Activated T-helper 2 cell treated with anti-CD3 and anti-CD28 coated beads, Interferon-gamma antibody, Interleukin-2, Interleukin-4, amounts not matched to agents 10 μg/mL and 5 μg/mL and 100 μg/mL, durations not matched to agents 14 hours and 24 hours and 36 hours (primary cell): ENCODE measurements at regions of chr11 and their contacts with region 1.

Region 1: GRCh38 chr11:7694235-7694634 is 12.0 kb downstream of the OVCH2 start:
- DNase-seq: no peak
- H3K4me3 Mint-ChIP-seq: no peak overlapping the region
- H3K27ac Mint-ChIP-seq: no peak overlapping the region
- H3K4me1 Mint-ChIP-seq: peaks cover 6% of the 10 kb centered on the region
- H3K27me3 Mint-ChIP-seq: peaks cover 36% of the 10 kb centered on the region

Region 2: DNA sequence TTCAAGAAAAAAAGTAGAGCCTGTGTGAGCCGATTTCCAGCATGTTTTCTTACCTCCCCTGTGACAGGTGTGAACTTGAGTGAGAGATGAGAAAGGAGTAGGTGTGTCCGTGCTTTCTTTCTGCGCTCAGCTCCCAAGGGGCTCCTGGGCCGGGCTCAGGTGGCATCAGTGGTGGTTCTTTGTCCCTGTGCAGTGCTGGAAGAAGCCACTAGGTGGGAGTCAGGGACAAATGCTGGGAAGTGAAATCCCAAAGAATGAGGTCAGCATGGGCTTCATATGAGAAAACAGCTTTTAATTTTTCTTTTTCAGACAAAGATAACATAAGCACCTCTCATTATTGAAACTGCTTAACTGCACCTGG is 122.6 kb before region 1 on chr11:
- intact Hi-C with region 1: loop called (anchors 2 kb)
- DNase-seq: no peak
- H3K4me3 Mint-ChIP-seq: no peak overlapping the region
- H3K27ac Mint-ChIP-seq: no peak overlapping the region
- H3K4me1 Mint-ChIP-seq: peaks cover 4% of the 10 kb centered on the region
- H3K27me3 Mint-ChIP-seq: peaks cover 21% of the 10 kb centered on the region

Region 3: DNA sequence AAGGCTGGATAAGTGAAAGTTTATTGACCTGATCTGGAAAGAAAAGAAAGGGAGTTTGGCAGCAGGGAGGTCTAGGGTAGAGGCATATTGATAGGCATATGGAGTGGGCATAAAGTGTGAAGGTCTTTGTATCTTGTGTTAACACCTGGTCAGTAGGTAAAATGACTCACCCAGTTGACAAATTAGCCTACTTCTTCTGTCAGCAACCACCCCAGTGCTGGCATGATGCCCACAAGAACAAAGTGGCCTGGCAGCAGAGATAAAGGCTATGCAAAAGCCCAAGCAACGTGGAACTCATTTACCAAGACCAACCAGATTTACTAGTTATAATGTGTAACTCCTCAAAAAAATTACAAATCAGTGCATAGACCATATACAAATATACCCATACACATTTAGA is 242.4 kb after region 1 on chr11:
- intact Hi-C with region 1: no loop called
- DNase-seq: no peak
- H3K4me3 Mint-ChIP-seq: no peak overlapping the region
- H3K27ac Mint-ChIP-seq: no peak overlapping the region
- H3K4me1 Mint-ChIP-seq: no peaks in the 10 kb centered on the region
- H3K27me3 Mint-ChIP-seq: no peaks in the 10 kb centered on the region